ENCODE measurements at regions of chr9 and their contacts with region 1.

Region 1: DNA sequence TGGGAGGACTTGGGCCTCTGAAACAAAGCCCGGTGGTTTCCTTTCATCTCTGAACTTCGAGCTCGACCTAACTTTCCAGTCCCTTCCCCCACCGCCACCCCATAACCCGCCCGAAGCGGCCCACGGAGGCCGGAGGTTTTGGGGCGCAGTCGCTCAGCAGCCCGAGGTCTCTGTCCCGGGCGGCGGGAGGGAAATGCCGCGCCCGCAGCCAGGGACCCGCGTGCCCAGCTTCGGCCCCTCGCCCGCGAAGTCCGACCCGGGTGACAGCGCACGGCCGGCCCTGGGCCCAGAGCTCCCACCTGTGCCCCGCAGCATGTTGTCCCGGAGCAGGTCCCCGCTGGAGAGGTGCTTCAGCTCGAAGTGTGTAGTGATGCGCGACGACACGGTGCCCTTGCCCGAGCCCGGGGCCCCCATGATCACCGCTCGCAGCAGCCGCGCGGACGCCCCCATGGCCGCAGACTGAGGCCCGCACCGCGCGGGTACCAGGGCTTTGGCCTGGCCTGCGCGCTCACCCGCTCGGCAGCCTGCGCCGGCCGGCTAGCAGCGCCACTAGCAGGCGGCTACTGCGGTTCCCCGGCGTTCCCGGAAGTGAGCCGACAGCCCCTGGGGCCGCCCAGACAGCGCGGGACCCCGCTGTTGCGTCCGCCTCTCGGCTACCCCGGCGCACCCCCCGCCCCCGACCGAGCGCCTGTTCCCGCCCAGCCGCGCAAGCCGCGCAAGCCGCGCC is at the start of gene AK3:
- DNase-seq: peak; percentile 85
- H3K4me3 Mint-ChIP-seq: peak within 1 kb of the TSS; percentile 90
- H3K27ac Mint-ChIP-seq: peak within 1 kb of the TSS; percentile 97
- H3K4me1 Mint-ChIP-seq: peaks cover 24% of the 10 kb centered on the region
- H3K27me3 Mint-ChIP-seq: no peaks in the 10 kb centered on the region
- CTCF ChIP-seq: no peak
- total RNA-seq, gene AK3: 61.0 and 64.1 TPM in 2 replicates

Region 2: GRCh38 chr9:4662108-4662988 is 78.5 kb before region 1 on chr9 and contains the start of gene PLPP6:
- CTCF ChIA-PET with region 1: interaction called, 8 read pairs
- POLR2A ChIA-PET with region 1: interaction called, 34 read pairs
- intact Hi-C with region 1: loop called (anchors 1 kb)
- DNase-seq: peak; percentile 93
- H3K4me3 Mint-ChIP-seq: peak within 1 kb of the TSS; percentile 72
- H3K27ac Mint-ChIP-seq: peak within 1 kb of the TSS; percentile 65
- H3K4me1 Mint-ChIP-seq: peaks cover 40% of the 10 kb centered on the region
- H3K27me3 Mint-ChIP-seq: no peaks in the 10 kb centered on the region
- CTCF ChIP-seq: peak; percentile 29
- total RNA-seq, gene PLPP6: 6.3 and 8.3 TPM in 2 replicates

Region 3: GRCh38 chr9:4727593-4727992 is 13.2 kb before region 1 on chr9:
- CTCF ChIA-PET with region 1: interaction called, 15 read pairs
- POLR2A ChIA-PET with region 1: interaction called, 8 read pairs
- intact Hi-C with region 1: no loop called
- DNase-seq: no peak
- H3K4me3 Mint-ChIP-seq: no peak overlapping the region
- H3K27ac Mint-ChIP-seq: no peak overlapping the region
- H3K4me1 Mint-ChIP-seq: peaks cover 6% of the 10 kb centered on the region
- H3K27me3 Mint-ChIP-seq: no peaks in the 10 kb centered on the region
- CTCF ChIP-seq: no peak

Region 4: DNA sequence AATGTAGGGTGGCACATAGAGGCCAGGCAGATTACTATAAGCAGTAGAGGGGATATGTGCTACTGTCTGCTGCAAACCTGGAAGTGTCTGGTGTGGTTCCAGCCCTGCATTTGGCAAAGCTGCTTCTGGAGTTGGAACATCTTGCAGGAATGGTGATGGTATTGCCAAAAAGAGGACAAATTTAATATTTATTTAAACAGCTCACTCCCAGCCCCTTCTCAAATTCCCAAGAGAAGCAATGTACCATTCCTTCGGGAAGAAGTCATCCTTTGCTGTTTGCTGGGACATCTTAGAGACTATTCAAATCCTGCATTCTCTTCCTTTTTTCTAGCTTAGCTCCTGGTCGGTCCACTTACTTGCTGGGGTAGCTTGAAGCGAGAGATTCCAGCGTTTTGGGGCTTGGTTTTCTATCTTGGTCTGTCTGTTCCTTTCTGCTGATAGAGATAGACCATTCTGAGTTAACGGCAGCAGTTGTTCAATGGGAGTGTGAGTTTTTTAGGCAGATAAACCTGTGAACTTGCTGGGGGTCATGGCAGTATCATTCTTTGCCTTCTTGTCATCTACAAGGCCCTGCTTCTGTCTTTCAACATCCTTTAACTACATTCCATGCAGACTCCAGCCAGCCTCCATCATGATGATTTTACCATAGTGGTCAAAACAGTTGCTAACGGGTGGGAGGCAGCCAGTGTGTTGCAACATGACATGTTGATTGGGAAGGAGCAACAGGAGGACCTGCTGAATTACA is 121.9 kb after region 1 on chr9:
- CTCF ChIA-PET with region 1: interaction called, 3 read pairs
- POLR2A ChIA-PET with region 1: interaction called, 10 read pairs
- intact Hi-C with region 1: no loop called
- DNase-seq: no peak
- H3K4me3 Mint-ChIP-seq: no peak overlapping the region
- H3K27ac Mint-ChIP-seq: no peak overlapping the region
- H3K4me1 Mint-ChIP-seq: peaks cover 34% of the 10 kb centered on the region
- H3K27me3 Mint-ChIP-seq: no peaks in the 10 kb centered on the region
- CTCF ChIP-seq: no peak

Measured in MCF 10A (cell line).